ENCODE measurements at regions of chr12 and their contacts with region 1.

Region 1: GRCh38 chr12:121550974-121551634 is 29.7 kb downstream of the KDM2B start:
- DNase-seq: no peak
- ATAC-seq: no peak

Region 2: DNA sequence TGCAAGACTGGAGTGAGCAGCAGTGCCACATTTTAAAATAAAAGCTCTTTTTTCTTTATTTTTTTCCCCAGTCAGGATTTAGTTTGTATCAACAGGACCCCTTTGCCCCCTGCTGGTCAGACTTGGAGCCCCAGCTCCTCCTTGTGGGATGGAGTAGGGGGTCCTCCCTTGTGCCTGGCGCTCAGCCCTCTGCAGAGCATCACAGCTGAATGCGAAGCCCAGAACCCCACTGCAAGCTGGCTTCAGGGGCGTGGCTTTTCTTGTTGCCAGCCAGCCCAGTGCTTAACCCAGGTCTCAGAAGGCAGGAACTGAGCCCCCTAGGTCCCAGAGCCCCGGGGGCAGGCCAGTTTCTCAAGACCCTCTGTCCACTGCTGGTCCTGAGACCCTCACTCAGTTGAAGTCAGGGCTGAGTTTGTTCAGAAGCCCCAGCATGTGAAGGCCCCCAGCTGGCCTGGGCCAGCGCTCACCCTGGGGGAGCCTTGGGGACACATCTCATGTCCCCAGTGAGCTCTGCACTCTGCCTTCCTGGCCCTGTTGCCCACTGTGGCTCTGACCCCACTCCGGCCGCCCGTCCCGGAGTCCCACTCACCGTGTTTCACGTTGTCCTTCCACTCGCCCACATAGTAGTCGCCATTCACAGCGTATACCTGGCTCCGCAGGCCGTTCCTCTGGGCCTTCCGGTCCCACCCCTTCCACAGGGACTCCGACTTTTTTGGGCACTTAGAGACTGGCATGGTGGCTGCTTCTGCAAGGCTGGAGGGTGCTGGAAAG is 117.8 kb after region 1 on chr12:
- intact Hi-C with region 1: loop called (anchors 5 kb)
- DNase-seq: no peak
- ATAC-seq: no peak

Region 3: DNA sequence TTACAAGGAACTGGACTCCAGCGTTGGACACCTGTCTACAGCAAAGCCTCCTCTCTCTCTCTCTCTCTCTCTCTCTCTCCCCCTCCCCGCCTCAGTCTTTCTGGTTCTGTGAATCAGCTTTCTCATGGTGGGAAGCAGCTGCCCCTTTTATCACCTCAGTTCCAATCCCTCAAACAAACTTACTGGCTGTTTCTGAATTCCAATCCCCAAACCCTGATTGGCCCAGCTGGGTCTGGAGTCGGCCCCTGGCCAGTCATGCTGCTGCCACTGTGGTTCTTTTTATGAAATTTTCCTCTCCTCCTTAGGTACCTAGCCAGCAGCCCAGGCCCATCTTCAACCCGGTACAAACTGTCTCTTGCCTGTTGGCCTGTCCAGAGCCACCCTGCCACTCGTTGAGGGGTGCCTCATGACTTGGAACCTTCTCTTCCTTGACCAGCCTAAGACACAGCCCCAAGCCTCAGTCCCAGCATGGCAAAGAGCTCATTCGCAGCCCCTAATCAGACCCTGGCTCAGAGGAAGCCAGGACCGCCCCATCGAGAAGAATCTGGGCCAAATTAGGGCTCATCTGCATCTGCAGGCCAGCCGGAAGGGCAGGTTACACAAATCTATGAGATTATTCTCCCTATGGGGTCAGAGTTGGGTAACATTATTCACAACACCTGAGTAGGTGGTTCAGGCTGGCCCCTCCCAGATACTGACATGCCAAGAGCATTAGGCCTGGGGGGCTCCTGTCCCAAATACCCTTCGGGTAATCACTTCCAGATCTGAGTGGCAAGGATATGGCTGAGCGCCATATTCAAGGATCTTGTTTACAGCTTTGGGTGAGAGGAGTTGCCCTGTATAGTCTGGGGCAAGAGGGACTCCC is 127.8 kb after region 1 on chr12:
- intact Hi-C with region 1: loop called (anchors 1 kb)
- DNase-seq: no peak
- ATAC-seq: no peak

Region 4: DNA sequence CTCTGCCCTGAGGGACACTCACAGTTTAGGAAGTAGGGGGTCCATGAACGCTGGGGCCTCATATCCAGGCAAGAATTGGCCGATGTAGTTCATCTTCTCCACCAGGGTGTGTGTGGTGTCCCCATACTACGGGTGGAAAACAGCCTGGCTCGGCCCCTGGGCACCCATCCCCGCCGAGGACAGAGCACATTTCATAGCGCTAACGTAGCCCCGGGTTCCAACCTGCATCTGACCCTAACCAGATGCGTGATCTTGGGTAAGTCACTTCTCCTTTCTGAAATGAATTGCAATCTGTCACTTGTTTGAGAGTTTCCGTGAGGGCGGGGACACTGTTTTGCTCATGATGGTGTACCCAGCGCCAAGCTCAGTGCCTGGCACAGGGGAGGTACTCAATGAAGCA is 298.6 kb after region 1 on chr12:
- intact Hi-C with region 1: no loop called
- DNase-seq: no peak
- ATAC-seq: no peak